PC-9 (cell line): ENCODE measurements at regions of chr2 and their contacts with region 1.

Region 1: GRCh38 chr2:237512774-237513466 is 25.9 kb downstream of the MLPH start:
- DNase-seq: peak; percentile 80 to 91
- H3K4me3 ChIP-seq: no peak overlapping the region
- H3K27ac ChIP-seq: no peak overlapping the region
- H3K4me1 ChIP-seq: no peaks in the 10 kb centered on the region
- H3K27me3 ChIP-seq: no peaks in the 10 kb centered on the region
- CTCF ChIP-seq: peak; percentile 99

Region 2: GRCh38 chr2:237171396-237171795 is 341.5 kb before region 1 on chr2:
- CTCF ChIA-PET with region 1: no interaction called
- POLR2A ChIA-PET with region 1: no interaction called
- intact Hi-C with region 1: loop called (anchors 1 kb)
- DNase-seq: peak; percentile 50 to 78
- H3K4me3 ChIP-seq: no peak overlapping the region
- H3K27ac ChIP-seq: no peak overlapping the region
- H3K4me1 ChIP-seq: peaks cover 13% of the 10 kb centered on the region
- H3K27me3 ChIP-seq: no peaks in the 10 kb centered on the region
- CTCF ChIP-seq: peak; percentile 65

Region 3: DNA sequence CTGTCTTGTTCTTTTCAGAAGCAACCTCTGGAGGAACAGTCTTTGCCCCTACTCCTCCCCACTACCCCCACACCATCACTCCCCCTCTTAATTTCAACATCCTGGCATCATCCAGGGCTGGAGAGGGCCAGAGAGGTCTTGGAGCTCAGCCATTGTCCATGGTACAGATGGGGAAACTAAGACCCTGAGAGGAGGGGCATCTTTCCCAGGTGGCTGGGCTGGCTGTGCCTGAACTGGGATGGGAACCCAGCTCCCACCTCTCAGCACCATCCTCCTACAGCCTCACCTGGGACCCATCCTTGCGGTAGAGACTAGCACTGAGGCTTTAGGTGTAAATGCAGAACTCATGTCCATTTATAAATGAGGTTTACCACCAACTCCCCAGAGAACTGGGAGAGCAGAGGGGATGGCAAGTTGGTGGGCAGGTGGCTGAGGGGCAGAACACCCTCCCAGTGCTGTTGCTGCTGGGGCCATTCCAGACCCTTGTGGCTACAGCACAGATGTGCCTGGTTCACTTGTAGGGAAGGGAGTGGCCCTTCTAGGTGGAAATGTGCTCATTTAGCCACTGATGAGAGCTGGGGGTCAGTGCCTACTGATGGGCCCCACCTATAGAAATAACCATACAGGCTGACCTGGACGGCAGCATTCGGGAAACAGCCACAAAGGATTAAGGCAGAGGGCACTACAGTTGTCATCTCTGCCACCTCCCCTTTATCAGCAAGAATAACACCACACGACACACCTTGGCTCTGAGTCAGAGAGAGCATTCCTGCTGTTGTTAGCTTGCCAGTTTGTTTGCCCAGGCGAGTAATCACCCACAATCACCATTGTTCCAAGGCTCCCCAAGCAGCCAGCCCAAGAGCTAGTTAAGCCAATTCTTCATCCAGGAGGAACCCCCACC is 23.8 kb before region 1 on chr2:
- CTCF ChIA-PET with region 1: interaction called, 7 read pairs
- POLR2A ChIA-PET with region 1: interaction called, 5 read pairs
- intact Hi-C with region 1: loop called (anchors 1 kb)
- DNase-seq: peak; percentile 90 to 98
- H3K4me3 ChIP-seq: peak overlapping the region; percentile 70
- H3K27ac ChIP-seq: peak overlapping the region; percentile 99
- H3K4me1 ChIP-seq: peaks cover 68% of the 10 kb centered on the region
- H3K27me3 ChIP-seq: no peaks in the 10 kb centered on the region
- CTCF ChIP-seq: no peak

Region 4: GRCh38 chr2:237547841-237548416 is 35.0 kb after region 1 on chr2:
- CTCF ChIA-PET with region 1: no interaction called
- POLR2A ChIA-PET with region 1: no interaction called
- intact Hi-C with region 1: no loop called
- DNase-seq: no peak
- H3K4me3 ChIP-seq: no peak overlapping the region
- H3K27ac ChIP-seq: no peak overlapping the region
- H3K4me1 ChIP-seq: no peaks in the 10 kb centered on the region
- H3K27me3 ChIP-seq: no peaks in the 10 kb centered on the region
- CTCF ChIP-seq: no peak

Region 5: DNA sequence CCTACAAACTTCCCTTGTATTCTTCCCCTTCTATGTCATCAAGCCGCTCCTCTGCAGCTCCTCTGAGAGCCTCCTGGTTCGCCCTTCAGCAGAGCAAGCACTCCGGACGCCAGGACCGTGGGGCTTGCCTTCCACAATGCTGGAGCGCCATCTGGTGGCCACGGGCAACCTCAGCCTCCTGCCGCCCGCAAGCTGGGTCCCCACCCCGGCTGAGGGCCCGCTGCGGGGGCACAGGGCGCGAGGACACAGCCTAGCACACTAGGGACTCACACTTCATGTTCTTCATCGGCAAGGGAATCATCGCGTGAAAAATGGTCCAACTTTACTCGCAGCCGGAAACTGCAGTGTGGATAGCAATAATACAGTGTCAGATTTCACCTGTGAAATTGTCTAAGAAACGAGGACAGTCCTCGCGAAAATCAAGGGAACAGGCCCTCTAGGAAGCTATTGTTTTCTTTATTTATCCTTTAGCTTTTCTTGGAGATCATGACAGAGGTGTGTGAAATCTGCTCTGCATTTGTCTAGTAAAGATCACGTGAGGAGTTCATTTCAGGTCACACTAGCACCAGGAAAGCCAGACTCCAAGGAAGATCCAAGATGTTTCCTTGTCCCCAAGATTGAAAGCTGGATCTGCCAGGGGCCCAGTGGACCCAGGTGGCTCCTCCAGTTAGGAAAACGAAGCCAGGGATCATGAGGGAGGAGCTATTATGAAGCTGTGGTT is 59.3 kb after region 1 on chr2:
- CTCF ChIA-PET with region 1: interaction called, 43 read pairs
- POLR2A ChIA-PET with region 1: no interaction called
- intact Hi-C with region 1: loop called (anchors 1 kb)
- DNase-seq: peak; percentile 81 to 94
- H3K4me3 ChIP-seq: no peak overlapping the region
- H3K27ac ChIP-seq: no peak overlapping the region
- H3K4me1 ChIP-seq: peaks cover 5% of the 10 kb centered on the region; the same call in 1 of the 2 replicates
- H3K27me3 ChIP-seq: no peaks in the 10 kb centered on the region
- CTCF ChIP-seq: peak; percentile 100

Region 6: DNA sequence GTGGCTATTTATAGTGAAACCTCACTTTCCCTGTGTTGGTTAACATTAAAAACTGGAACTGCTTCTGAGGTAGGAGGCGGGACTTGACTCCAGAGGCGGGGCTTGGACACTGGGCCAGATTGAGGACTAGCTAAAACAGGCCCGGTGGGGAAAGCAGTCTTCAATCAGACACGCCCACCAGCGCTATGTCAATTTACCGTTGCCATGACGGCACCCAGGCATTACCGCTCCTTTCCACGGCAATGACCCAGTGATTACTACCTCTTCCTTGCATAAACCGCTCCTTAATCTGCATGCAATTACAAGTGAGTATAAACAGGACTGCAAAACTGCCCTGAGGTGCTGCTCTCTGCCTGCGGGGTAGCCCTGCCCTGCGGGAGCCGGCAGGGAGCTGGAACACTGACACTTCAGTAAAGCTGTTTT is 149.8 kb after region 1 on chr2:
- CTCF ChIA-PET with region 1: interaction called, 4 read pairs
- POLR2A ChIA-PET with region 1: no interaction called
- intact Hi-C with region 1: loop called (anchors 5 kb)
- DNase-seq: peak; percentile 95 to 96
- H3K4me3 ChIP-seq: peak overlapping the region; percentile 9; the same call in 1 of the 2 replicates
- H3K27ac ChIP-seq: no peak overlapping the region
- H3K4me1 ChIP-seq: peaks cover 46% of the 10 kb centered on the region
- H3K27me3 ChIP-seq: no peaks in the 10 kb centered on the region
- CTCF ChIP-seq: no peak

Region 7: DNA sequence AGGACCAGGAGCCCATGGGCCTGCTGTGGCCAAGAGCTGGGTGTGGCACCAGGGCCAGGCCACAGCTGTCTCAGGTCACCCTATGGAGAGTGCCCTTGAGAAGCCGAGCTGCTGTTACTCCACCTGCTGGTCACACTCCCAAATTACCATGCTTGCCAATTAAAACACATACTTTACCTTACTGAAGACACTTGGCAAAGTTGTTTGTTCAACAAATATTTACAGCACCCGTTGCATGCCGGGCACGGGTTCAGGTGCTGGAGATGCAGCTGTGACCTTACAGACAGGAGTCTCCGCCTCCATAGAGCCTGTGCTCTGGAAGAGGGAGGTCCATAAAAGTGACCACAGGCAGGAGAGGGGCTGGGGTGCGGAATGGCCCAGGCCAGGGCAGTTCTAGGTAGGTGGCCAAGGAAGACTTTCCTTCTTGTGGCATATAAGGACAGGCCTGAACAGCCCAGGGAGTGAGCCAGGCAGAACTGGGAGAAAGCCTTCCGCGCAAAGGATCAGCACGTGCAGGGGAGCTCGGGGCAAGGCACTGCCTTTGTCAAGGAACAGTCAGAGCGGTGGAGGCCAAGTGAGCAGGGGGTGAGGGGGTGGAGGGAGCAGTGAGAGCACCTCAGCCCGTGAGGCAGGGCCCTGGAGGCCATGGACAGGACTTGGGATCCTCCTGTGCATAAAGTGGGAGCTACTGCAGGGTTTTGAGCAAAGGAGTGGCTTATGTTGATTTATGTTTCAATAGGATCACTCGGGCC is 262.1 kb after region 1 on chr2:
- CTCF ChIA-PET with region 1: no interaction called
- POLR2A ChIA-PET with region 1: no interaction called
- intact Hi-C with region 1: loop called (anchors 1 kb)
- DNase-seq: peak; percentile 59 to 63
- H3K4me3 ChIP-seq: no peak overlapping the region
- H3K27ac ChIP-seq: no peak overlapping the region
- H3K4me1 ChIP-seq: no peaks in the 10 kb centered on the region
- H3K27me3 ChIP-seq: no peaks in the 10 kb centered on the region
- CTCF ChIP-seq: peak; percentile 89